ENCODE measurements at regions of chr5 and their contacts with region 1.

Region 1: GRCh38 chr5:177497292-177498033 is at the start of gene PDLIM7:
- DNase-seq: peak; percentile 98
- H3K4me3 Mint-ChIP-seq: peak within 1 kb of the TSS; percentile 89
- H3K27ac Mint-ChIP-seq: peak within 1 kb of the TSS; percentile 78
- H3K4me1 Mint-ChIP-seq: peaks cover 39% of the 10 kb centered on the region
- H3K27me3 Mint-ChIP-seq: peaks cover 21% of the 10 kb centered on the region
- total RNA-seq, gene PDLIM7: 64.9 and 65.3 TPM in 2 replicates

Region 2: GRCh38 chr5:177311723-177312648 is 185.5 kb before region 1 on chr5 and contains the start of gene MXD3:
- intact Hi-C with region 1: loop called (anchors 2 kb)
- DNase-seq: peak; percentile 99
- H3K4me3 Mint-ChIP-seq: peak within 1 kb of the TSS; percentile 85
- H3K27ac Mint-ChIP-seq: peak within 1 kb of the TSS; percentile 93
- H3K4me1 Mint-ChIP-seq: peaks cover 31% of the 10 kb centered on the region
- H3K27me3 Mint-ChIP-seq: no peaks in the 10 kb centered on the region
- total RNA-seq, gene MXD3: 9.1 and 11.7 TPM in 2 replicates

Region 3: GRCh38 chr5:177390363-177391300 is 106.8 kb before region 1 on chr5:
- intact Hi-C with region 1: loop called (anchors 1 kb)
- DNase-seq: peak; percentile 96
- H3K4me3 Mint-ChIP-seq: no peak overlapping the region
- H3K27ac Mint-ChIP-seq: peak overlapping the region; percentile 73
- H3K4me1 Mint-ChIP-seq: peaks cover 33% of the 10 kb centered on the region
- H3K27me3 Mint-ChIP-seq: peaks cover 7% of the 10 kb centered on the region

Region 4: GRCh38 chr5:177425801-177426565 is 71.5 kb before region 1 on chr5:
- intact Hi-C with region 1: loop called (anchors 1 kb)
- DNase-seq: peak; percentile 100
- H3K4me3 Mint-ChIP-seq: peak overlapping the region; percentile 93
- H3K27ac Mint-ChIP-seq: peak overlapping the region; percentile 98
- H3K4me1 Mint-ChIP-seq: peaks cover 52% of the 10 kb centered on the region
- H3K27me3 Mint-ChIP-seq: no peaks in the 10 kb centered on the region

Region 5: DNA sequence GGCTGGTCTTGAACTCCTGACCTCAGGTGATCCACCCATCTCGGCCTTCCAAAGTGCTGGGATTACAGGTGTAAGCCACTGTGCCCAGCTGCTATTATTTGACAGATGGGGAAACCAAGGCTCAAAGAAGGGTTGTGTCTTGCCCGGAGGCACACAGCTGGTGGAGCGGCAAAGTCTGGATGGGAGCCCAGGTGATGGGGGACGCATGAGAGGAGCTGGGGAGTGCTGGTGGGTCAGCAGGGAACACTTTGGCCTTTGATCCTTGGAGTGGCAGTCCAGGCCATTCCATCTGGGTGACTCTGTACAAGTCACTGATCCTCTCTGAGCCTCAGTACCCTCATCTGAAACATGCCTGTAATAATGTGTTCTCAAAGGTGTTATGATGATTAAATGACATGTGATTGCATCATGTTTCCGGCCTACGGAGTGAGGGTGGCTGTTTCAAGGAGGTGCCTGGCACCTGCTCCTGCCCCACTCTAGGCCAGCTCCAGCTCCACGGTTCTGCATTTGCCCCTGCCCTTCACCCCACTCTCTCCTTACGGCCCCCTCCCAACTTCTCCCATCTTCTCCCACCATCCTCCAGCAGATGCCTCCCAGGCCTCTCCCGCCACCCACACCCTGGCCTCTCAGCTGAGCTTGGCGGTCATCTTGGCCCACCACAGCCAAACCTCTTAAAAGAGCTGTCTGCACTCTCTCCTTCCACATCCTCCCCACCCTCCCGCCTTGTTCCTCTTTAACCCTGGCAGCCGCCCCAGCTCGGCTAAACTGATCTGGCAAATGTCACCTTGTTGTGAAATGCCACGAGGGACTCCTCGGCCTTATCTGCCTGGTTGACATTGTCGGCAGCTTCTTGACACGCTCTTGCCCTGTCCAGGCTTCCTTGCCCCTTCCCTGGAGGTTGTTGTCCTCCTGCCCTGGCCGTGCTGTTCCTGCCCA is 18.5 kb before region 1 on chr5:
- intact Hi-C with region 1: loop called (anchors 2 kb)
- DNase-seq: peak; percentile 74
- H3K4me3 Mint-ChIP-seq: peak overlapping the region; percentile 53
- H3K27ac Mint-ChIP-seq: peak overlapping the region; percentile 92
- H3K4me1 Mint-ChIP-seq: peaks cover 37% of the 10 kb centered on the region
- H3K27me3 Mint-ChIP-seq: peaks cover 6% of the 10 kb centered on the region

Region 6: DNA sequence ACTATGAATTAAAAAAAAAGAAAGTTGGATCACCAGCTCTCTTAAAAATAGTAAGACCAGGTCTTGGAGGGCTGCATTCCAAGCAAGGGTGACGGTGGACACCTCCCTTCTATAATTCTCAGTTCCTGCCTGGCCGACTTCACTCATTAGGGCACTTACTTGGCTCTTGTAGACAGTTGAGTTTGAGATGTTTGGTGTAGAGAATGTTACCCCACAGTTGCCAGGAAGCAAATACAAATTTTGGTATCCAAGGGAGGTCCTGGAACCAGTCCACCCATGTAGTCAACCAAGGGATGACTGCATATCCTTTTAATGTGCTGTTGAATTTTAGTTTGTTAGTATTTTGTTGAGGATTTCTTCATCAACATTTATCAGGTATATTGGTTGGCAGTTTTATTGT is 123.1 kb after region 1 on chr5:
- intact Hi-C with region 1: no loop called
- DNase-seq: no peak
- H3K4me3 Mint-ChIP-seq: no peak overlapping the region
- H3K27ac Mint-ChIP-seq: no peak overlapping the region
- H3K4me1 Mint-ChIP-seq: peaks cover 2% of the 10 kb centered on the region
- H3K27me3 Mint-ChIP-seq: no peaks in the 10 kb centered on the region